ENCODE measurements at regions of chr9 and their contacts with region 1.

Region 1: DNA sequence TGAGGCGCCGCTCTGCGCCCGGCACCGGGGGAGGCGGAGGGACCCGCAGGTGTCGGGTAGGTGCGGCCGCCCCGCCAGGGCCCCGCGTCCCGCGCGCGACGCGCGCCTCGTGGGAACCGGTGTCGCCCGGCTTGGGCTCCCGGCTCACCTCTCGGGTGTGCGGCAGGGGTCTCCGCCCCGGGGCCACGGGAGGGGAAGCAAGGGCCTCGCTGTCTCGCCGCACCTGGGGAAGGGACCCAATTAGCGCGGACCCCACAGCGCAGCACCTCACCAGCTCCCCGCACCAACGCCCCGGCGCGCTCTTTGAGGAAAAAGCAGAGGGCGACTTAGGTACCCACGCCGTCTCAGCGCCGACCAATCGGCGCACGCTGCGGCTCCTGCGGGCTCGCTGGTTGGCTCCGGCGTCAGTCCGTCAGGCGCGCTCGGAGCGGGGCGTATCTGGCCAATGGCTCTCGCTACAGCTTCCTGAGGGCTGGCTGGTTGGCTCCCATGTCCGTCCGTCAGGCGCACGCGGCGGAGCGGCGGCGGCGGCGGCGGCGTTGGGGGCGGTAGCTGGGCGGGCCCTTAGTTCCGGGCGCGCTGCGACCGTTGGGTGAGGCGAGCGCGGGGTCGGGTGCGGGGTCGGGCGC is at the start of gene TRAF2:
- DNase-seq: peak; percentile 100
- H3K4me3 ChIP-seq: peak within 1 kb of the TSS; percentile 62 to 87 (median 85)
- H3K27ac ChIP-seq: peak within 1 kb of the TSS; percentile 56
- H3K4me1 ChIP-seq: peaks cover 14% of the 10 kb centered on the region
- H3K27me3 ChIP-seq: no peaks in the 10 kb centered on the region
- CTCF ChIP-seq: no peak
- POLR2A ChIP-seq: peak; percentile 47
- total RNA-seq, gene TRAF2: 21.5 and 23.1 TPM in 2 replicates

Region 2: GRCh38 chr9:136790927-136791641 is 95.0 kb before region 1 on chr9 and contains the start of gene TMEM141:
- CTCF ChIA-PET with region 1: no interaction called
- POLR2A ChIA-PET with region 1: no interaction called
- dilution Hi-C with region 1: no loop called
- intact Hi-C with region 1: loop called (anchors 5 kb)
- DNase-seq: peak; percentile 99
- H3K4me3 ChIP-seq: peak within 1 kb of the TSS; percentile 54 to 72 (median 59)
- H3K27ac ChIP-seq: peak within 1 kb of the TSS; percentile 31
- H3K4me1 ChIP-seq: peaks cover 7% of the 10 kb centered on the region
- H3K27me3 ChIP-seq: peaks cover 2 to 6% of the 10 kb centered on the region in 2 experiments
- CTCF ChIP-seq: no peak
- POLR2A ChIP-seq: peak; percentile 89
- total RNA-seq, gene TMEM141: 43.2 and 44.9 TPM in 2 replicates

Region 3: DNA sequence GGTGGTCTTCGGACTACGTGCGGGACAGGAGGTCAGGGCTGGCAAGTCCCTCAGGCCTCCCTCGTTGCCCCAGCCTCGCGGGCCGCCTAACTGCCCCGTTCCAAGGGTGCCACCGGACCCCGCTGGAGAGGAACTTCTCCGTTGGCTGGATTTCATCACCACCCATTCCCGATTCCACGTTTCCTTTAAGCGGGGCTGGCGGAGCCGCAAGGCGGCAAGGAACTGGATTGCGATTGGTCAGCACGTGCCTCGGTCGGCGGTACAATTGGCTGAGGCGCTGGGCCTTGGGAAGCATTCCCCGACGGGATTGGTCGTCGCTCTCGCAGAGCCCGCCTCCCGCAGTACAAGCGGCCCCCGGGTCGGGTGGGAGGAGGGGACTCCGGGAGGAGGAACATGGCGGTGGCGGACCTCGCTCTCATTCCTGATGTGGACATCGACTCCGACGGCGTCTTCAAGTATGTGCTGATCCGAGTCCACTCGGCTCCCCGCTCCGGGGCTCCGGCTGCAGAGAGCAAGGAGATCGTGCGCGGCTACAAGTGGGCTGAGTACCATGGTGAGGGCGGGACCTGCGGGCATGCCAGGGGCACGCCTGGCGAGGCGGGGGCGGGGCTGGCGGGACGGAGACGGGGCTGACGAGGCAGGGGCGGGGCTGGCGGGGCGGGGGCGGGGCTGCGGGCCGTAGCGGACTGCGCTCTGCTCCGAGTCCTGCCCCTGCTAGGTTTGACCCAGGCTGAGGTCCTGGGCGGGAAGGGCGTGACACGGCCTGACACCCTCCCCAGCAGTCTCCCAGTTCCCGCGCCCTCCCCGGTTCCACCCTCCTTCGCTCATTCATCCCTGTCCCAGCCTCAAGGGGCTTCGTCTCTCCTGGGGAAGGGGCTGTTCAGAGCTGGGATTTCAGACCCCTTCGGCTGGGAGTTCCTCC is 36.8 kb before region 1 on chr9 and contains the start of gene PHPT1:
- CTCF ChIA-PET with region 1: interaction called, 3 read pairs
- POLR2A ChIA-PET with region 1: no interaction called
- dilution Hi-C with region 1: no loop called
- intact Hi-C with region 1: loop called (anchors 1 kb)
- DNase-seq: peak; percentile 99
- H3K4me3 ChIP-seq: peak within 1 kb of the TSS; percentile 29 to 90 (median 54)
- H3K27ac ChIP-seq: no peak within 1 kb of the TSS
- H3K4me1 ChIP-seq: peaks cover 10% of the 10 kb centered on the region
- H3K27me3 ChIP-seq: peaks cover 8 to 23% of the 10 kb centered on the region in 2 experiments
- CTCF ChIP-seq: no peak
- POLR2A ChIP-seq: peak; percentile 97
- total RNA-seq, gene PHPT1: 139 and 165 TPM in 2 replicates

Region 4: DNA sequence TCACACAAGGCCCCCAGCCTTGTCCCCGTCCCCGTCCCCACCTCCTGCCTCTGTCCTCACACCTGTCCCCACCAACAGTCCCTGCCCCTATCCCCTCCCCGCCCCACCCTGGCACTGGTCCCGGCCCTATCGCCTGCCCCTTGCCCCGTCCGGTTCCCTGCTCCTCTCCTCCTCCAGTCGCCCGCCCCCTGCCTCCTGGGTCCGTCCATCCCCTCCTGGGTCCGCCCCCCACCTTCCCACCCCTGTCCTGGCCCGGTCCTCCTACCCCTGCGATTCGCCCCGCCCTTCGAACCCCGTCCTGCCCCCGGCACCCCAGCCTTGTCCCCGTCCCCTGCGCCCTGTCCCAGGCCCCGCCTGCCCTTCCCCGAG is 20.3 kb before region 1 on chr9:
- CTCF ChIA-PET with region 1: interaction called, 3 read pairs
- POLR2A ChIA-PET with region 1: no interaction called
- dilution Hi-C with region 1: no loop called
- intact Hi-C with region 1: loop called (anchors 1 kb)
- DNase-seq: no peak
- H3K4me3 ChIP-seq: peak overlapping the region; percentile 48 to 98 (median 54)
- H3K27ac ChIP-seq: no peak overlapping the region
- H3K4me1 ChIP-seq: peaks cover 6% of the 10 kb centered on the region
- H3K27me3 ChIP-seq: no peaks in the 10 kb centered on the region
- CTCF ChIP-seq: no peak
- POLR2A ChIP-seq: no peak